HEK293T (cell line): ENCODE measurements at regions of chr11 and their contacts with region 1.

Region 1: GRCh38 chr11:123640677-123641494 is 13.5 kb downstream of the SCN3B start:
- DNase-seq: peak; percentile 77

Region 2: DNA sequence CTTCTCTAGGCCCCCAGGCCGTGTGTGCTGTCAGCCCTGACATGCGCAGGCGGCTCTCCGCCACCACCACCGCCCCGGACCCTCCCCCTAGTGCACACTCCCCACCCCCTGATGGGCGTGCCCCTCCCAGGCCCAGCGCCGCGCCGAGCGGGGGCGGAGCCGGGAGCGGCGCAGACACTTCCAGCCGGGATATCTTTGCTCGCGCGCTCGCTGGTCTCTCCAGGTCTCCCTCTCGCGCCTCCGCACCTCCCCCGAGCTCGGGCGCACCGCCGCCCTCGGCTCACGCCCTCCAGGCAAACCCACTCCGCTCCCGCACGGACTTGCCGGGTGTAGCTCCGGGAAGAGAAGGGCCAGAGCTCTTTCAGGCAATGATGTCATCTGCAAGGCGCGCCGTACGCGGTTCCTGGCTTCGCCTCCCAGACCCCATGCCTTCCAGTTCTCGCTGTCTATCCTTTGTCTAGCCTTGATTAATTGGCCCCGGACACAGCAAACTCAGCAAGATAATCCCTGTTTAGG is 13.7 kb after region 1 on chr11 and contains the start of gene SCN3B:
- CTCF ChIA-PET with region 1: interaction called, 10 read pairs
- POLR2A ChIA-PET with region 1: no interaction called
- DNase-seq: peak; percentile 90

Region 3: GRCh38 chr11:123665306-123665705 is 24.4 kb after region 1 on chr11:
- CTCF ChIA-PET with region 1: no interaction called
- POLR2A ChIA-PET with region 1: no interaction called
- DNase-seq: no peak

Region 4: GRCh38 chr11:123707606-123708205 is 66.8 kb after region 1 on chr11:
- CTCF ChIA-PET with region 1: interaction called, 115 read pairs
- POLR2A ChIA-PET with region 1: no interaction called
- DNase-seq: peak; percentile 65